CD8-positive, alpha-beta T cell (primary cell): ENCODE measurements at regions of chr20 and their contacts with region 1.

Region 1: GRCh38 chr20:50588034-50588611 is 77.9 kb downstream of the PTPN1 start:
- DNase-seq: peak; percentile 45 to 81 (median 74)
- ATAC-seq: peak; percentile 74
- H3K4me3 ChIP-seq: no peak overlapping the region
- H3K4me3 Mint-ChIP-seq: no peak overlapping the region
- H3K27ac ChIP-seq: no peak overlapping the region
- H3K27ac Mint-ChIP-seq: no peak overlapping the region
- H3K4me1 ChIP-seq: no peaks in the 10 kb centered on the region
- H3K4me1 Mint-ChIP-seq: no peaks in the 10 kb centered on the region
- H3K27me3 ChIP-seq: no peaks in the 10 kb centered on the region
- H3K27me3 Mint-ChIP-seq: no peaks in the 10 kb centered on the region
- CTCF ChIP-seq: peak; percentile 96

Region 2: GRCh38 chr20:50504231-50504823 is 83.8 kb before region 1 on chr20:
- CTCF ChIA-PET with region 1: interaction called, 11 read pairs
- POLR2A ChIA-PET with region 1: interaction called, 3 read pairs
- intact Hi-C with region 1: no loop called
- DNase-seq: peak in 2 of 9 experiments; percentile 37 to 54
- ATAC-seq: no peak
- H3K4me3 ChIP-seq: no peak overlapping the region
- H3K4me3 Mint-ChIP-seq: no peak overlapping the region
- H3K27ac ChIP-seq: no peak overlapping the region
- H3K27ac Mint-ChIP-seq: no peak overlapping the region
- H3K4me1 ChIP-seq: no peaks in the 10 kb centered on the region
- H3K4me1 Mint-ChIP-seq: peaks cover 6% of the 10 kb centered on the region
- H3K27me3 ChIP-seq: no peaks in the 10 kb centered on the region
- H3K27me3 Mint-ChIP-seq: no peaks in the 10 kb centered on the region
- CTCF ChIP-seq: no peak